Transverse colon (tissue), 4 donors: ENCODE measurements at regions of chr6 and their contacts with region 1.

Region 1: DNA sequence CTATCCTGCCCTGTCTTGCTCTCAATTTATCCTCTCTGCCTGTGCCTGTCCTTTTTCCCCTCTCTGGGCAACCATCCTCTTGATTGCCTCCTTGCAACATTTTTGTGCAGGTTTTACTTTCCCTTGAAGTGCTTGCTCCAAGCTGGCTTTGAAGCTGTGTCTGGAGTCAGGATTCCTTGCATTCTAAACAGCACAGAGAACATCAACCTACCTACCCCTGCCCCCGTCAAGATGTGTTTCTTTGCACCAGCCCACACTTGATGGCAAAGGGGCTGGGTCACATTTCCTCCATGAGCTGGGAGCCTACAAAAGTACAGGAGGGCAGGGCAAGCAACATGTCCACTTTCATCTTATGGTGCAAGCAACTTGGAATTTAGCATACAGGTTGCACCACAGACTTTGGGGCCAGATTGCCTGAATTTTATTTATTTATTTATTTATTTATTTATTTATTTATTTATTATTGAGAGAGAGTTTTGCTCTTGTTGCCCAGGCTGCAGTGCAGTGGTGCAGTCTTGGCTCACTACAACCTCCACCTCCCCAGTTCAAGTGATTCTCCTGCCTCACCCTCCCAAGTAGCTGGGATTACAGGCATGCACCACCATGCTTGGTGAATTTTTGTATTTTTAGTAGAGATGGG is 206.3 kb downstream of the COL19A1 start:
- DNase-seq: no peak
- H3K4me3 ChIP-seq: no peak overlapping the region
- H3K27ac ChIP-seq: no peak overlapping the region
- H3K4me1 ChIP-seq: no peaks in the 10 kb centered on the region
- H3K27me3 ChIP-seq: no peaks in the 10 kb centered on the region
- CTCF ChIP-seq: no peak
- EP300 ChIP-seq: no peak
- POLR2A ChIP-seq: no peak

Region 2: GRCh38 chr6:70094156-70094555 is 21.5 kb after region 1 on chr6:
- in situ Hi-C with region 1: no loop called
- intact Hi-C with region 1: loop called (anchors 1 kb)
- DNase-seq: no peak
- H3K4me3 ChIP-seq: no peak overlapping the region
- H3K27ac ChIP-seq: no peak overlapping the region
- H3K4me1 ChIP-seq: no peaks in the 10 kb centered on the region
- H3K27me3 ChIP-seq: no peaks in the 10 kb centered on the region
- CTCF ChIP-seq: no peak
- EP300 ChIP-seq: no peak
- POLR2A ChIP-seq: no peak

Region 3: GRCh38 chr6:70183538-70183937 is 110.9 kb after region 1 on chr6:
- in situ Hi-C with region 1: no loop called
- intact Hi-C with region 1: no loop called
- DNase-seq: no peak
- H3K4me3 ChIP-seq: no peak overlapping the region
- H3K27ac ChIP-seq: no peak overlapping the region
- H3K4me1 ChIP-seq: no peaks in the 10 kb centered on the region
- H3K27me3 ChIP-seq: no peaks in the 10 kb centered on the region
- CTCF ChIP-seq: no peak
- EP300 ChIP-seq: no peak
- POLR2A ChIP-seq: no peak

Region 4: DNA sequence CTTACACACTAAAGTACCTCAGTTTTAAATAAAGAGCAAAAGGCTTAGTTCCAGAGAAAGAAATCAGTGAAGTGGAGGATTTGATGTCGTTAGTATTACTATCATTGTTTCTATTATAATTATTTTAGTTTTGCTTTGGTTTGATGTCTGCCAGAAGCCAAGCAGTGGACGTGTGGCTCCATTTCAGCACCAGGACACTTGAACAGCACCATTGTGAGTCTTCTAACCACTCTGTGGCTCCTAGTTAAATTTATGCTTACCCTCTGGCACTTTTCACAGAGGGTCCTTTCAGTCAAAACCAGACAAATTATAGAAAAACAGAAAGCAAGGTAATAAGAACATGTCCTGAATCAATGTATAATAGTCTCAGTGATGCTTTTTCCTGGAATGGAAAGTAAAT is 226.8 kb after region 1 on chr6:
- in situ Hi-C with region 1: no loop called
- intact Hi-C with region 1: no loop called
- DNase-seq: no peak
- H3K4me3 ChIP-seq: no peak overlapping the region
- H3K27ac ChIP-seq: no peak overlapping the region
- H3K4me1 ChIP-seq: no peaks in the 10 kb centered on the region
- H3K27me3 ChIP-seq: peaks cover 6% of the 10 kb centered on the region
- CTCF ChIP-seq: no peak
- EP300 ChIP-seq: no peak
- POLR2A ChIP-seq: no peak